ENCODE measurements at regions of chr9 and their contacts with region 1.

Region 1: DNA sequence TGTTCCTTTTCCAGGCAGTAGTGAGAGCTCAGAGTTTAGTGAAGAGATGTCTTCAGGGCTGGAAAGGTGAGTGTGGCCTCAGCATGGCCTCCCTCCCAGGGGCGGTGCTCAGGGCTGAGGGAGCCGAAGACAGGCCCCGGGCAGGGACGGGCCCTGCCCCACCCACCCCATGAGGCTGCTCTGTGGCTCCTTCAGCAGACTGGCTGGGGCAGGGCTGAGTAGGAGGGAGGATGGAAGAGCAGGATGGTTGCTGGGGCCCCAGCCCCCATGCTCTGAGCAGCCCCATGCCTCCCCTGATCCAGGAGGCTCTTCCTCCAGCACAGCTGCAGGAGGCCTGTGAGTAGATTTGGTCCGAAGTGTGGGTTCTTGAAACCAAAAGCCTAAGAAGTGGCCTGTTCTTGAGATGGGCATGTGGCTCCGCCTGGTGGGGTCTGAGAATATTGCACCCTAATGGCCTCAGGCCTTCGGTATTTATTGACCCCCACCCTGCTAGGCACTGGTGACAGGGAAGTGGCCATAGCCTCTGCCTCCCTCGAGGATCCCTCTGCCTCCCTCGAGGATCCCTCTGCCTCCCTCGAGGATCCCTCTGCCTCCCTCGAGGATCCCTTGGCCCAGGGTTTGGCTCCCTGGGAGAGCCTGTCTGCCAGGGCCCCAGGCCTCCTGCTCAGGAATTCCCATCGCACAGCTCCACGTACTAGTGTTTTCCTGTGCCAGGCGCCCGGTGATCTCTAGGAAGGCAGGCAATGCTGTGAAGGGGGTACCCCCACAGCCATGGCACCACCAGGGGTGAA is 65.4 kb upstream of the GARNL3 start:
- DNase-seq: peak; percentile 56 to 78 (median 69)
- ATAC-seq: peak; percentile 86
- H3K4me3 ChIP-seq: no peak overlapping the region
- H3K4me3 Mint-ChIP-seq: no peak overlapping the region
- H3K27ac ChIP-seq: no peak overlapping the region
- H3K27ac Mint-ChIP-seq: no peak overlapping the region
- H3K4me1 ChIP-seq: peaks cover 0 to 5% of the 10 kb centered on the region in 2 donors
- H3K4me1 Mint-ChIP-seq: peaks cover 9 to 17% (median 13%) of the 10 kb centered on the region in 7 donors
- H3K27me3 ChIP-seq: no peaks in the 10 kb centered on the region
- H3K27me3 Mint-ChIP-seq: peaks cover 0 to 26% (median 2%) of the 10 kb centered on the region in 5 donors

Region 2: GRCh38 chr9:126965541-126966428 is 233.4 kb before region 1 on chr9:
- CTCF ChIA-PET with region 1: interaction called, 19 read pairs
- POLR2A ChIA-PET with region 1: no interaction called
- intact Hi-C with region 1: loop called (anchors 1 kb)
- DNase-seq: peak in 8 of 9 donors; percentile 18 to 60 (median 46)
- ATAC-seq: peak; percentile 76
- H3K4me3 ChIP-seq: no peak overlapping the region
- H3K4me3 Mint-ChIP-seq: no peak overlapping the region
- H3K27ac ChIP-seq: no peak overlapping the region
- H3K27ac Mint-ChIP-seq: no peak overlapping the region
- H3K4me1 ChIP-seq: no peaks in the 10 kb centered on the region
- H3K4me1 Mint-ChIP-seq: peaks cover 2 to 12% (median 7%) of the 10 kb centered on the region in 7 donors
- H3K27me3 ChIP-seq: no peaks in the 10 kb centered on the region
- H3K27me3 Mint-ChIP-seq: peaks cover 14 to 30% (median 25%) of the 10 kb centered on the region in 5 donors

Region 3: GRCh38 chr9:127253446-127253845 is 54.2 kb after region 1 on chr9:
- CTCF ChIA-PET with region 1: no interaction called
- POLR2A ChIA-PET with region 1: no interaction called
- intact Hi-C with region 1: no loop called
- DNase-seq: no peak
- ATAC-seq: no peak
- H3K4me3 ChIP-seq: no peak overlapping the region
- H3K4me3 Mint-ChIP-seq: no peak overlapping the region
- H3K27ac ChIP-seq: no peak overlapping the region
- H3K27ac Mint-ChIP-seq: no peak overlapping the region
- H3K4me1 ChIP-seq: no peaks in the 10 kb centered on the region
- H3K4me1 Mint-ChIP-seq: peaks cover 0 to 3% (median 0%) of the 10 kb centered on the region in 7 donors
- H3K27me3 ChIP-seq: no peaks in the 10 kb centered on the region
- H3K27me3 Mint-ChIP-seq: peaks cover 13 to 64% (median 26%) of the 10 kb centered on the region in 5 donors

Measured in naive thymus-derived CD4-positive, alpha-beta T cell (primary cell).